ENCODE measurements at regions of chr16 and their contacts with region 1.

Region 1: GRCh38 chr16:46973207-46973995 is at the start of gene DNAJA2:
- DNase-seq: peak; percentile 87
- ATAC-seq: peak; percentile 93 to 97
- H3K4me3 ChIP-seq: peak within 1 kb of the TSS; percentile 65 to 93 (median 86)
- H3K27ac ChIP-seq: peak within 1 kb of the TSS; percentile 95 to 98 (median 98)
- H3K4me1 ChIP-seq: peaks cover 34 to 35% of the 10 kb centered on the region in 2 donors
- H3K27me3 ChIP-seq: no peaks in the 10 kb centered on the region
- CTCF ChIP-seq: no peak
- POLR2A ChIP-seq: peak; percentile 90 to 91
- total RNA-seq, gene DNAJA2: 57.4 to 79.6 (median 70.5) TPM

Region 2: DNA sequence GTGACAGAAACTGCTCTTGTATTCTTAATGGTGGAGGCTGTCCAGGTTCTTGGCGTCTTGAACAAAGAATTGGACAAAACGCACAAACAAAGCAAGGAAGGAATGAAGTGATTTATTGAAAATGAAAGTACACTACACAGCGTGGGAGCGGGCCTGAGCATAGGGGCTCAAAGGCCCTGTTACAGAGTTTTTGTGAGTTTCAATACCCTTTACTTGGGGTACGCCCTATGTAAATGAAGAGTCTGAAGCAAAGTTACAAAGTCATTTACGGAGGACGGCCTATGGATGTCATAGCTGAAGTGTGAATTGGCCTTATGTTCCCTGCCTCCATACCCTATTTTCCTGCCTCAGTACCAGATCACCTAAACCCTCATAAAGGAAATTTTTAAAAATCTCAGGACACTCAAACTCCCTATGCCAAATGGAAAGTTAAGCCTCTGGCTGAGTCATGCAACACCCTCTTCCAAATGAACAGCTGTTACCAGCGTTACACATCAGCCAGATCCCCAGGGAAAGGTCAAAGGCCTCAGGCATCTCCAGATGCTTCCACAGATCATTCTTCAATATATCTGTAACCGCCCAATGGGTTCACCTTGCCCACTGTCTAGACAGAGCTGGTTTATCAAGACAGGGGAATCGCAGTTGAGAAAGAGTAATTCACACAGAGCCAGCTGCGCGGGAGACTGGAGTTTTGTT is 323.3 kb before region 1 on chr16:
- in situ Hi-C with region 1: no loop called
- intact Hi-C with region 1: loop called (anchors 5 kb)
- DNase-seq: peak; percentile 41 to 74
- ATAC-seq: peak; percentile 88 to 89
- H3K4me3 ChIP-seq: peak overlapping the region; percentile 43 to 56 (median 47)
- H3K27ac ChIP-seq: peak overlapping the region; percentile 86 to 94 (median 90)
- H3K4me1 ChIP-seq: peaks cover 4 to 6% of the 10 kb centered on the region in 2 donors
- H3K27me3 ChIP-seq: no peaks in the 10 kb centered on the region
- CTCF ChIP-seq: no peak
- POLR2A ChIP-seq: no peak

Region 3: DNA sequence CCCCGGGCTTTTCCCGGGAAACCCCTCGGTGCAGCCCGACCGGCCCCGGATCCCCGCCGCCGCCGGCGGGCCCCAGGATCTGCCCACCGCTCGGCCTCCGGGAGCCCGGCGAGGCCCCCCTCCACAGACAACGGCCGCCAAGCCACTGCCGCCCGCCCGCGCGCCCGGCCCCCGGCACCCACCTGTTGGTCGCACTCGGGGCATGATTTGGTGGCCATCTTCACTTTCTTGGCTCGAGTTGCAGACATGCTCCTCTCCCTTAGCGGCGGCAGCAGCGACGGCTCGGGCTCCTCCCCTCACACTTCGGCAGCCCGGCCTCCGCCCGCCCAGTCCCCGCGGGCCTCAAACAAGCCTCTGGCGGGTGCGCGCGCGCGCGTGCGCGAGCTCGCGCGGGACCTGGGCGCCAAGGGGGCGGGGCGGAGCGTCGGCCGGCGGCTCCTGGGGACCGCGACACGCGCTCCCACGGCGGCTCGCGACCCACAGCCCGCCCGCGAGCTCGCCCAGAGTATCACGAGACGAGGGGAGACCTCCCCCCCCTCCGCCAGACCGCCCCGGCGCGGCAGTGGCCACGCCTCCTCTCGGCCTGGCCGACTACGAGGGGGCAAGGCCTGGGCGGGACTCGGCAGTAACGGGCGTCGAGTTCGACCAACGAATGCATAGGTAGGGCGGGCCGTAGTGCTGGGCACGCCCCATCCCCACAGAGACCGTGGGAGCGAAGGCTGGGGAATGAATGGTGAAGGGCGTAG is 142.3 kb before region 1 on chr16 and contains the start of gene C16orf87:
- in situ Hi-C with region 1: no loop called
- intact Hi-C with region 1: loop called (anchors 2 kb)
- DNase-seq: peak; percentile 88 to 92
- ATAC-seq: peak; percentile 89 to 93
- H3K4me3 ChIP-seq: peak within 1 kb of the TSS; percentile 69 to 93 (median 86)
- H3K27ac ChIP-seq: peak within 1 kb of the TSS; percentile 90 to 98 (median 95)
- H3K4me1 ChIP-seq: peaks cover 10 to 16% of the 10 kb centered on the region in 2 donors
- H3K27me3 ChIP-seq: no peaks in the 10 kb centered on the region
- CTCF ChIP-seq: peak in 1 of 5 experiments; percentile 15
- POLR2A ChIP-seq: peak; percentile 77 to 79
- total RNA-seq, gene C16orf87: 13.5 to 22.4 (median 20.3) TPM

Region 4: DNA sequence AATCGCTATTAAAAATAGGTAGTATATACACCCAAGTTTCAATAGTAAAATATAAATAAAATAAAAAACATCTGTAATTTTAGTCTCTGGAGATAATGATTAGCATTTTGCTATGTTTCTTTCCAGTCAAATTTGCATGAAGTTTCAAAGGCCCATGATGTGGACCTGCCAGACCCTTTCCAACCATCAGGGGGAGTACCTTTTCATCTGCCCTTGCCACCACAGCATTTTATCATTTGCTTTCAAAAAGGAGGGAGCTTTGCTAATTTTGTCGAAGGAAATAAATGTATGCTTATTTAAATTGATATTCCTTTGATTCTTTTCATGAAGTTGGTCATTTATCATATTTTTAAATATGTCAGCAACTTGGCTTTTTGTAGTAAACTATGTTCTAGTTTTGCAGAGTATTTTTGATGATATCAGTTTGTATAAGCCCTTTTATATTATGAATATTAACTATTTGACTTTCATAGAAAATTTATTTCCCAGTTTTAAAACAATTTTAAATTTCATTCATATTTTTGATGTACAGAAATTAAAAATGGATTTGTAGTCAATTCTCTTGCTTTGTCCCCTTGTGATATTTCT is 285.6 kb after region 1 on chr16:
- in situ Hi-C with region 1: no loop called
- intact Hi-C with region 1: no loop called
- DNase-seq: no peak
- ATAC-seq: no peak
- H3K4me3 ChIP-seq: no peak overlapping the region
- H3K27ac ChIP-seq: no peak overlapping the region
- H3K4me1 ChIP-seq: peaks cover 0 to 6% of the 10 kb centered on the region in 2 donors
- H3K27me3 ChIP-seq: no peaks in the 10 kb centered on the region
- CTCF ChIP-seq: peak in 4 of 5 experiments; percentile 33 to 66 (median 49)
- POLR2A ChIP-seq: no peak

Region 5: DNA sequence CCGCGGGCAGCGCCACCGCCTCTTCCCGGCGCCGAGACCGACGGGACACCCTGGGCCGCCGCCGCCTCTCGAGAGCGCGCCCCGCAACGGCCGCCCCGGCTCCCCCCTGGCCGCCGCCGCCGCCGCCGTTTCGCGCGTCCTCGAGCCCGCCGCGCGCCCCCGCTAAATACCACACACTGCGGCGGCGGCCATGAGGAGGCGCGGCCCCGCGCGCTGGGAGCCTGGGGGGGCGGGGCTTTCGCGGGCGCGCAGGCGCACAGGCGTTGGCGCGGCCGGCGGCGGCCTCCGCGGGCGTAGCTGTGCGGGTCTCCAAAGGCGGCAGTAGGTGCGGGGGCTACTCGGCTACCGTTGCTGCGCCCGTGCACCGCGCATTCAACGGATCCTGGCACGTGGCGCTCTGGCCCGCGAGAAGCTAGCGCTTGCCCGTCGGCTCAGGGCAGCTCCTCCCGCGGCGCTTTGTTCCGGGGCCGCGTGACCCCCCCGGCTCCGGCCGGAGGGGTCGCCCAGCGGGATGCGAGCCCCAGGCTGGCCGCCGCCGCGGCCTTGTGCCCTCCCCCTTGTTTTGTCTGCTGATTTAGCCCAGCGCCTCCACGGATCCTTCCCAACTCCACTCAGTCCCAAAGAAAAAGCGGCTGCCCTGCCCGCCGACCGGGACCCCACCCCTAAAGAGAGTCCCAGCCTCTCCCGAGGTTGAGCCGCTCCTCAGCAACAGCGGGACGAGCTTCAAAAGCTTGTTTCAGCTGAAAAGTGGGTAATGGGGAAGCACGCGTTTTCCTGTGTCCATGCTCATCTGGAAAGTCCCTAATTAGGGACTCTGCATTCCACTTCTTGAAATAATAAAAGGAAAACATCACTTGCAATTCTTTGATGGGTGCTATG is 1412.1 kb after region 1 on chr16 and contains the start of gene SIAH1:
- in situ Hi-C with region 1: no loop called
- intact Hi-C with region 1: loop called (anchors 10 kb)
- DNase-seq: peak; percentile 69 to 82
- ATAC-seq: peak; percentile 76 to 78
- H3K4me3 ChIP-seq: peak within 1 kb of the TSS; percentile 77 to 89 (median 79)
- H3K27ac ChIP-seq: peak within 1 kb of the TSS; percentile 94 to 99 (median 98)
- H3K4me1 ChIP-seq: peaks cover 28 to 36% of the 10 kb centered on the region in 2 donors
- H3K27me3 ChIP-seq: no peaks in the 10 kb centered on the region
- CTCF ChIP-seq: peak in 2 of 5 experiments; percentile 6 to 16
- POLR2A ChIP-seq: peak; percentile 96 to 97
- total RNA-seq, gene SIAH1: 19.9 to 21.0 (median 20.1) TPM

Measured in gastrocnemius medialis (tissue), 4 donors.